Pancreas (tissue), 10 donors: ENCODE measurements at regions of chr13 and their contacts with region 1.

Region 1: GRCh38 chr13:31236211-31236786 is 36.5 kb downstream of the B3GLCT start:
- DNase-seq: no peak
- ATAC-seq: peak in 3 of 4 donors; percentile 44 to 55 (median 44)
- H3K4me3 ChIP-seq: no peak overlapping the region
- H3K27ac ChIP-seq: no peak overlapping the region
- H3K4me1 ChIP-seq: no peaks in the 10 kb centered on the region
- H3K27me3 ChIP-seq: no peaks in the 10 kb centered on the region
- CTCF ChIP-seq: peak in 3 of 4 donors; percentile 33 to 47 (median 37)

Region 2: GRCh38 chr13:31424117-31424729 is 187.9 kb after region 1 on chr13:
- intact Hi-C with region 1: loop called in 2 of 3 experiments (anchors 10 kb)
- DNase-seq: peak; percentile 44 to 80 (median 74)
- ATAC-seq: peak; percentile 88 to 99 (median 98)
- H3K4me3 ChIP-seq: no peak overlapping the region
- H3K27ac ChIP-seq: no peak overlapping the region
- H3K4me1 ChIP-seq: peaks cover 0 to 2% (median 0%) of the 10 kb centered on the region in 3 donors
- H3K27me3 ChIP-seq: no peaks in the 10 kb centered on the region
- CTCF ChIP-seq: peak; percentile 71 to 86 (median 83)

Region 3: DNA sequence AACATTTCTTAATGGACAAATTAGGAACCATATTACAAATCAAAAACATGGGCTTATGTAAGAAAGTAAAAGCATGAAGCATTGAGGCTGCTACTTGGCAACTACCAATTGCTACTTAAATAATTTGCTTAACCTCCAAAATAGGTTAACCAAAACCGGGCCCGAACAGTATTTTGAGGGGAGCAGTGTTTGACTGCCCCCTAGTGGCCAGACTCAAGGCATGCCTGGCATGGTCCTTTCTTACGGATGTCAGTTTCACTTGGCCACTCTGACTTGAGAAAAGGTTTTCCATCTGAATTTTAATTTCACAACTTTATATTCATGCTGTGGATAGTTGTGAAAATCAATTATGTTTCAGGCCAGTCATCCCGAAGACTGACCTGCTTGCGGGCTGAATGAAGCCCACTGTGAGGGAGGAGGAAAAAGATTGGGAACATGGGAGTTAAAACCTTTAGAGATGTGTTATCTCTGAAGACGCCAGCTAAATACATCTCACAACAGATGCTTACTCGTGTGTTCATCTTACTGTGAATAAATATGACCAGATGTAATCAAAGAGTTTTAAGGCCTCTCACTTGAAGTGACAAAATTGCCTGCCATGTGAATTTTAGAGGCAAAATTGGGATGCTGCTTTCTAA is 505.9 kb after region 1 on chr13:
- intact Hi-C with region 1: loop called in 1 of 3 experiments (anchors 10 kb)
- DNase-seq: peak in 5 of 6 donors; percentile 17 to 70 (median 46)
- ATAC-seq: peak; percentile 63 to 92 (median 90)
- H3K4me3 ChIP-seq: no peak overlapping the region
- H3K27ac ChIP-seq: no peak overlapping the region
- H3K4me1 ChIP-seq: no peaks in the 10 kb centered on the region
- H3K27me3 ChIP-seq: peaks cover 0 to 22% (median 8%) of the 10 kb centered on the region in 4 donors
- CTCF ChIP-seq: peak; percentile 89 to 99 (median 97)